MCF 10A (cell line): ENCODE measurements at regions of chr21 and their contacts with region 1.

Region 1: DNA sequence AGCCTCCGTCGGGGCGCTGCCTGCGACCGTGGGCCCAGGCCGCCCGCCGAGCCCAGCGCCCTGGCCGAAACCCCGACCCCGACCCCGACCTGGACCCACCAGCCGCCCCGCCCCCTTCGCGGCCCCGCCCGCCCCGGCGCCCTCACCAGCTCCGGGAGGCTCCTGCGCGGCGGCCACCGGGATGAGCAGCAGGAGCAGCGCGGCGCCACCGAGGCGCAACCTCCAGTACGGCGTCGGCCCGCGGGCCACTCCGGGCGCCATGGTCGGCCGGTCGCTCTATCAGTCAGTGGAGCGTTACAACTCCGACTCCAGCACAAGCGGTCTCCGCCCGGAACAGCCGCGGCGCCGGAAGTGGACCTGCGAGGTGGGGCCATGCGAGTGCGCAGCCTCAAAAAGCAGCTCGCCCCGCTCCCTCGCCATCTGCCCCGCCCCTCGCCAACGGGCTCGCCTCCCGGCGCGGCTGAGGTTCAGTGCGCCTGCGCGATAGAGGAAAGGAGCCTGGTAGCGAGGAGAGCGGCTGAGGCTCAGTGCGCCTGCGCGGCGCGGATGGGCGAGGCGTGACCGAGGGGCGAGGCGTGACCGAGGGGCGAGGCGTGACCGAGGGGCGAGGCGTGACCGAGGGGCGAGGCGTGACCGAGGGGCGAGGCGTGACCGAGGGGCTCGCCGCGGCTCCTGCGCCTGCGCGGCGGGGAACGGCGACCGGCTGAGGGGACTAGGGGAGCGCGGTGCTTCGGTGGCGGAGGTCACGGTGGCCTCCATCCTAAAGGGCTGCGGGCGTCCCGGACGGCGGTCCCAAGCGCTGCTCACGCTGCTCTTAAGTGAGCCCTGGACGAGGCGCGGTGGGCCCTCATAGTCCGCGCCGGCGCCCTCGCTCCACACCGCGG is at the start of gene PTTG1IP:
- DNase-seq: peak; percentile 98
- H3K4me3 Mint-ChIP-seq: peak within 1 kb of the TSS; percentile 80
- H3K27ac Mint-ChIP-seq: peak within 1 kb of the TSS; percentile 91
- H3K4me1 Mint-ChIP-seq: peaks cover 40% of the 10 kb centered on the region
- H3K27me3 Mint-ChIP-seq: no peaks in the 10 kb centered on the region
- CTCF ChIP-seq: no peak
- total RNA-seq, gene PTTG1IP: 326 and 338 TPM in 2 replicates

Region 2: GRCh38 chr21:44817506-44817880 is 56.1 kb before region 1 on chr21:
- CTCF ChIA-PET with region 1: no interaction called
- POLR2A ChIA-PET with region 1: interaction called, 4 read pairs
- intact Hi-C with region 1: loop called (anchors 5 kb)
- DNase-seq: peak; percentile 84
- H3K4me3 Mint-ChIP-seq: peak overlapping the region; percentile 72
- H3K27ac Mint-ChIP-seq: no peak overlapping the region
- H3K4me1 Mint-ChIP-seq: peaks cover 10% of the 10 kb centered on the region
- H3K27me3 Mint-ChIP-seq: no peaks in the 10 kb centered on the region
- CTCF ChIP-seq: no peak

Region 3: DNA sequence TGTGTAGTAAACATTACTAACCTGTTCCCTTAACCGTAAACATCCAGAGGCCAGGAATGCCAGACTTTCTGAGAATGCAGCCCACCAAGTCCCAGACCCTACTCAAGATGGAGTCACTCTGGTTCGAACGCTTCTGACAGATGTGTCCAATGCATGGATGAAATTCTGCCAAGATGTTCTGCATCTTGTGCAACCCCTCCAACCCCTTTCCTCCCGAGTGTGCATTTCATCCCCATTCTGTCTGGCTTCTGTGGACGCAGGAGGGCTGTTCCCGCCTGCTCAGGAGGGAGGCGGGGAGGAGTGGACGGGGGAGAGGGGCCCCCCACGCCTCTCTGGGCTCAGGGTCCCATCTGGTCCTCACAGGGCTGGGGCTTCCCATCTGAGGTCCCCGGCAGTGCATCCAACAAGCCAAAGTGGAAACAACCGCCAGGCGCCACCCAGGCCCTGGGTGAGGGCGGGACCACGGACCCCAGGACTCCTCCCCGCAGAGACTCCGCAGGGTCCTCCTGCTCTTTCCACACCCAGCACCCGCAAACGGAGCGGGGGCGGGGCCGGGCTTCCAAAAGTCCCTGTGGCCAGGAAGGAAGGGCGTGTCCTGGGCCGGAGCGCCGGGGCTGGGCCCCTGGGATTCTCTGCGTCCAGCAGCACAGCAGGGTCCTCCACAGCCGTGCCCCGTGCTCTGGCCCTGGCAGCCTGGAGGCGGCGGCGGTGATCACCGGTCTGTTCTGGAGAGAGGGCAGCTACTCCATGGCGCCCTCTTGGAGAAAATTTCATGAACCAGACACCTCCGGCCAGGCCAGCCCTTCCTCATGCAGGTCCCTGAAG is 28.0 kb before region 1 on chr21:
- CTCF ChIA-PET with region 1: no interaction called
- POLR2A ChIA-PET with region 1: interaction called, 5 read pairs
- intact Hi-C with region 1: loop called (anchors 2 kb)
- DNase-seq: peak; percentile 63
- H3K4me3 Mint-ChIP-seq: peak overlapping the region; percentile 16
- H3K27ac Mint-ChIP-seq: no peak overlapping the region
- H3K4me1 Mint-ChIP-seq: no peaks in the 10 kb centered on the region
- H3K27me3 Mint-ChIP-seq: no peaks in the 10 kb centered on the region
- CTCF ChIP-seq: peak; percentile 32

Region 4: DNA sequence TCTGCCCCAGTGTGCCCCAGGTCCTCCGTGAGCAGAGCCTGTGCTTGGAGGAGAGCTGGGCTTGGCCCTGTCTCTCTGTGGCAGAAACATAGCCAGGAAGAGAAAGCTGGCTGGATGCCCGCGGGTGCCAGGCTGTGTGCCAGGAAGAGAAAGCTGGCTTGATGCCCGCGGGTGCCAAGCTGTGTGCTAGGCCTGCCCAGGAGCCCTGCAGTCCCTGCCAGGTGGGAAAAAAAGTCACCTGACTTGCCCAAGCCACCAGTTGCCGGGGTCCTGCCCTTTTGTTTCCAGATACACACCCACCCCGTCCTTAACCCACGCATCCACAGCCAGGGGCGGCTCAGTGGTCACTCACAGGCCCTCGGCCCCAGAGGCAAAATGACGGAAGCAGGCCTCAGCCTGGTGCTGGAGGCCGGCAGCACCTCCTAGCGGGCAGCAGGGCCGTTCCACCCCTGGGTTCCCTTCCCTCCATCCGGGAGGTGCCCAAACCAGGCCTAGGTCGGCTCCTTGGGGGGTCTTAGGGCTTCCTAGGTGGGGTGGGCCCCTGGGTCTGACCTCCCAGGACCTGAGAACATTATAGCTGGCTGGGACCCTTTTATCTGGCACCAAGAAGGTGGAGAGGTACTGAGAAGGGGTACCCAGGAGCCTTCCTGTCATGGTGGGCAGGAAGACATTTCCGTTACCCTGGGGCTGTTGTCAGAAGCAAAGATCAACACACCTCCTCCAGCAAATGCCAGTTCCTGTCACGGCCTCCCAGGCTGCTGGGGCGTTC is 38.0 kb after region 1 on chr21:
- CTCF ChIA-PET with region 1: interaction called, 6 read pairs
- POLR2A ChIA-PET with region 1: interaction called, 24 read pairs
- intact Hi-C with region 1: loop called (anchors 1 kb)
- DNase-seq: peak; percentile 93
- H3K4me3 Mint-ChIP-seq: peak overlapping the region; percentile 42
- H3K27ac Mint-ChIP-seq: peak overlapping the region; percentile 1
- H3K4me1 Mint-ChIP-seq: peaks cover 37% of the 10 kb centered on the region
- H3K27me3 Mint-ChIP-seq: no peaks in the 10 kb centered on the region
- CTCF ChIP-seq: peak; percentile 87

Region 5: GRCh38 chr21:44919111-44919912 is 45.7 kb after region 1 on chr21:
- CTCF ChIA-PET with region 1: interaction called, 3 read pairs
- POLR2A ChIA-PET with region 1: interaction called, 18 read pairs
- intact Hi-C with region 1: no loop called
- DNase-seq: no peak
- H3K4me3 Mint-ChIP-seq: no peak overlapping the region
- H3K27ac Mint-ChIP-seq: no peak overlapping the region
- H3K4me1 Mint-ChIP-seq: peaks cover 30% of the 10 kb centered on the region
- H3K27me3 Mint-ChIP-seq: no peaks in the 10 kb centered on the region
- CTCF ChIP-seq: no peak

Region 6: GRCh38 chr21:44939532-44940115 is 66.0 kb after region 1 on chr21 and contains the start of gene SLX9:
- CTCF ChIA-PET with region 1: no interaction called
- POLR2A ChIA-PET with region 1: interaction called, 38 read pairs
- intact Hi-C with region 1: no loop called
- DNase-seq: peak; percentile 77
- H3K4me3 Mint-ChIP-seq: peak within 1 kb of the TSS; percentile 85
- H3K27ac Mint-ChIP-seq: peak within 1 kb of the TSS; percentile 61
- H3K4me1 Mint-ChIP-seq: peaks cover 30% of the 10 kb centered on the region
- H3K27me3 Mint-ChIP-seq: no peaks in the 10 kb centered on the region
- CTCF ChIP-seq: no peak
- total RNA-seq, gene SLX9: 40.4 and 58.7 TPM in 2 replicates